SK-N-SH (cell line): ENCODE measurements at regions of chr9 and their contacts with region 1.

Region 1: DNA sequence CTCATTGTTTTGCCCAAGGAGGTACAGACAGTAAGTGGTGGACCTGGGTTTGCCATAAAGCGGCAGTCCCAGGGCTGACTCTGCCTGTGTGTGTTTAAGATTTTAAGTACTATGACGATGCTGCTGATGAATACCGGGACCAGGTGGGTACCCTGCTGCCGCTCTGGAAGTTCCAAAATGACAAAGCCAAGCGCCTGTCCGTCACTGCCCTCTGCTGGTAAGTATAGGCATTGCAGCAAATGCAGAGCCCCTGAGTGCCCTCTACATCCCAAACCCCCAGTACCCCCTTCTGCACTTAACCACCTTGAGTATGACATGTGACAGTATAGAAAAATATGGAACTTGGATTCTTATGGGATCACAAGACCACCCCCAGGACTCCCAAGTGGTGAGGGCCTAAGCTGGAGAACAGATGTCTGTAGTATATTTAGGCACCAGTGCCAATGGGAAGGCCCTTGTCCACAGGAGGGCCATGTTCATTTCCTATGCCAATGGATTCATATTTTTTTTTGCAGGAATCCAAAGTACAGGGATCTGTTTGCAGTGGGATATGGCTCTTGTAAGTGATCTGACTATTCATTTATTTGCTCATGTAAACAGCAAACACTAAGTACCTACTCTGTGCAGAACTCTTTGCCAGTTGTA is 22.0 kb downstream of the ENHO start:
- DNase-seq: peak; percentile 79
- H3K4me3 ChIP-seq: no peak overlapping the region
- H3K27ac ChIP-seq: no peak overlapping the region
- H3K4me1 ChIP-seq: peaks cover 0 to 6% of the 10 kb centered on the region in 2 experiments; a peak in 1 of 4 replicates
- H3K27me3 ChIP-seq: no peaks in the 10 kb centered on the region
- CTCF ChIP-seq: peak; percentile 97
- EP300 ChIP-seq: no peak
- RAD21 ChIP-seq: peak; percentile 93

Region 2: DNA sequence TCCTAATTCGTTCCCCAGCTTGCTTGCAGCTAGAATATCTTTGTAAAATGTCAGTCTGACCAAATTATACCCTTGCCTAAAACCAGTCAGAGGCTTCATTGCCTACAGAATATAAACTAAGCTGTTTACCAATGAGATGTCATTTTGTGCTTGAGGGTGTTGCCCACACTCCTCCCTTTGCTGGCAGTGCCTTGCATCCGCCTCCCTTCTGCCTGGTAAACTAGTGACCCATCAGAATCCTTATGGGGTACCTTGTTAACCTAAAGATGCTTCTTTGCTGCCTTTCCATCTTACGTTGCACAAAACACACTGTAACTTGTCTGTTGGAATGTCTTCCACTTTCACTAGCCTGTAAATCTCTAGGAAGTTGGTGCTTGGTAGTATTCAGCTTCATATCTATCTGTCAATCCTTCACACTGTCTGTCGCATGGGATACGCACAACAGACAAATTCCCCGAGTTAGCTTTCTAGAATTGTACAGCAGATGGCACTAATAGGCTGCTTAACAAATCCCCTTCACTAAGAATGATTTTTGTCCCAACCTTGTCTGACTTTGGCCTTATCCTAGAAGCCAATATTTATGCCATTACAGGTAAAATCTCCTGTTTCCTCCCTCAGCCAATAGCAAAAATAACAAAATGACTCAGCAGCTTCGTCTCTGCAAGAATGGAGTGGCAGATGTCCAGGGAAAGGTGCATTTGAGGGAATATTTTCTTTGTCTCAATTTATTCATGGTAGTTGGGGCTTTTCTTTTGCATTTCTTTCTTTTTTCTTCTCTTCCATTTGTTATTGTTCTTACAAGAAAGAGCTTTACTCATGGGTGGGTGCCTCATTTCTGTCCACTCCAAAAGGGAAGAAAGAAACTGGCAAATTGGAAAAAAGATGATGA is 168.4 kb before region 1 on chr9:
- CTCF ChIA-PET with region 1: interaction called, 45 read pairs
- POLR2A ChIA-PET with region 1: no interaction called
- DNase-seq: peak; percentile 46
- H3K4me3 ChIP-seq: no peak overlapping the region; a peak in 1 of 4 replicates
- H3K27ac ChIP-seq: no peak overlapping the region
- H3K4me1 ChIP-seq: peaks cover 0 to 6% of the 10 kb centered on the region in 2 experiments; a peak in 2 of 4 replicates
- H3K27me3 ChIP-seq: no peaks in the 10 kb centered on the region
- CTCF ChIP-seq: peak; percentile 62
- EP300 ChIP-seq: no peak
- RAD21 ChIP-seq: peak; percentile 88

Region 3: DNA sequence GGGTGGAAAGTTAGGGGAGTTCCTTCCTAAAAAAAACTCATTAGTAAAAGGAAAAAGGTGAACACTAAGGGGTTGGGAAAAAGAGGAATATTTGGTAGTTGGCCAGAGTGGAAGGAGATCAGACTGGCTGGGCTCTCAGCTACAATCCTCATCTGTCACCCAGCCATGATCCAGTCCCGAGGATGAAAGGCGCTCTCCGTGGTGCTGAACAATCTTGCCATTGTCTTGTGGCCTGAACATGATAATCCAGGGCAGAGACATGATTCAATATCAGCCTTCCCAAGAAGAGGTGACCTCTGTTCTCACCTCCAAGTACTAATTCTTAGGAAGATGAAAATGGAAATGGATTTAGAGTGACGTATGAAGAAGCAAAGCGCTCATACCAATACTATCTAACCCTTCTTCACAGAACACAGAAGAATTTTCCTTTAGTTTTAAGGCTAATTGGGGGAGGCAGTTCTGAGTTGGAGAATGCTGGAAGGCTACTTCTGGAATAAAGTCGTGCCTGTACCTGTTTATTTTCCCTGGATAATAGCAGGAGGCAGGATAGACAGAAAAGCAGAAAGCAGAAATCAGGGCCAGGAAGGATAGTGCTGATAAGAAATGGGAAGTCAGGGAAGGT is 87.4 kb before region 1 on chr9:
- CTCF ChIA-PET with region 1: interaction called, 17 read pairs
- POLR2A ChIA-PET with region 1: no interaction called
- DNase-seq: no peak
- H3K4me3 ChIP-seq: no peak overlapping the region
- H3K27ac ChIP-seq: no peak overlapping the region
- H3K4me1 ChIP-seq: peaks cover 0 to 12% of the 10 kb centered on the region in 2 experiments; a peak in 1 of 4 replicates
- H3K27me3 ChIP-seq: no peaks in the 10 kb centered on the region
- CTCF ChIP-seq: no peak
- EP300 ChIP-seq: no peak
- RAD21 ChIP-seq: no peak

Region 4: DNA sequence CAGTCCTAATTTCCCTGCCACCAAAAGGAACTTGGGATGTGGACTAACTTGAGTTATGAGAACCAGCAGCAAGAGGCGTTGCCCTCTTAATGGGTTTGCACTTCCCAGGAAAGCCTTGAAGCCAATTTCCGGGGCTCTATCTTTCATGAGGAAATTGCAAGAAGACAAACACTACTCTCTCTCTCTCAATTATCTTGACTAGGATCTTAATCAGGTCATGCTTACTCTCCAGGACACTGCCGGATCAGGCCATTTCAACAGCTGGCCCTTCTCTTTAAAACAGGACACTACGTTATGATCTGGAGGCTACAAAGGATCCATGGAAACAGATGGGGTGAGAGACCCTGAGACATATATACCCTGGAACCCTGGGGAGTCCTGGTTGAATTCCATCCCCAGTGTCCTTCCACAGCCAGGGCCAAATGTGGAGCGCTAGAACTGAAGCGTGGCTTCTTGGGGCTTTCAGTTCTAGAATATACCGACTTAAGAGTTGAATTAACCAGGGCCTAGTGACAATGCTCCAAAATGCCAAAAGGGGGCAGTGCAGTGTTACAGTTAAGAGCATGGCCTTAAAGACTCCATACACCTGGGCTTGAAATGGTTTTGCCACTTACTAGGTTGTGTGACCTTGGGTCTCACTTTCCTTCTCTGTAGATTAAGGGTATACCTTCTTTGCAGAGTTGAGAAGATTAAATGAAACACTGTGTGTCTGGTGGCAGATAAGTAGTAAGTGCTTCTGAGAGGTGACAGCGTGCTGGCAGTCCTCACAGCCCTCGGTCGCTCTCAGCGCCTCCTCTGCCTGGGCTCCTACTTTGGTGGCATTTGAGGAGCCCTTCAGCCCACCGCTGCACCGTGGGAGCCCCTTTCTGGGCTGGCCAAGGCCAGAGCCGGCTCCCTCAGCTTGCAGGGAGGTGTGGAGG is 63.5 kb before region 1 on chr9:
- CTCF ChIA-PET with region 1: interaction called, 114 read pairs
- POLR2A ChIA-PET with region 1: no interaction called
- DNase-seq: peak; percentile 74
- H3K4me3 ChIP-seq: no peak overlapping the region
- H3K27ac ChIP-seq: peak overlapping the region in 1 of 2 experiments; percentile 59; a peak in 2 of 4 replicates
- H3K4me1 ChIP-seq: peaks cover 12 to 21% of the 10 kb centered on the region in 2 experiments; a peak in 3 of 4 replicates
- H3K27me3 ChIP-seq: no peaks in the 10 kb centered on the region
- CTCF ChIP-seq: peak; percentile 92
- EP300 ChIP-seq: no peak
- RAD21 ChIP-seq: peak; percentile 94

Region 5: GRCh38 chr9:34458013-34458958 is 42.5 kb before region 1 on chr9 and contains the starts of genes DNAI1 and FAM219A:
- CTCF ChIA-PET with region 1: interaction called, 21 read pairs
- POLR2A ChIA-PET with region 1: no interaction called
- DNase-seq: peak; percentile 99
- H3K4me3 ChIP-seq: peak within 1 kb of the TSS; percentile 76 to 77
- H3K27ac ChIP-seq: peak within 1 kb of the TSS; percentile 61 to 82
- H3K4me1 ChIP-seq: peaks cover 20 to 21% of the 10 kb centered on the region in 2 experiments; a peak in 2 of 4 replicates
- H3K27me3 ChIP-seq: no peaks in the 10 kb centered on the region
- CTCF ChIP-seq: no peak
- EP300 ChIP-seq: no peak
- RAD21 ChIP-seq: no peak
- polyA plus RNA-seq, gene DNAI1: 0.46 and 0.55 TPM in 2 replicates
- polyA plus RNA-seq, gene FAM219A: 15.7 and 18.5 TPM in 2 replicates

Region 6: DNA sequence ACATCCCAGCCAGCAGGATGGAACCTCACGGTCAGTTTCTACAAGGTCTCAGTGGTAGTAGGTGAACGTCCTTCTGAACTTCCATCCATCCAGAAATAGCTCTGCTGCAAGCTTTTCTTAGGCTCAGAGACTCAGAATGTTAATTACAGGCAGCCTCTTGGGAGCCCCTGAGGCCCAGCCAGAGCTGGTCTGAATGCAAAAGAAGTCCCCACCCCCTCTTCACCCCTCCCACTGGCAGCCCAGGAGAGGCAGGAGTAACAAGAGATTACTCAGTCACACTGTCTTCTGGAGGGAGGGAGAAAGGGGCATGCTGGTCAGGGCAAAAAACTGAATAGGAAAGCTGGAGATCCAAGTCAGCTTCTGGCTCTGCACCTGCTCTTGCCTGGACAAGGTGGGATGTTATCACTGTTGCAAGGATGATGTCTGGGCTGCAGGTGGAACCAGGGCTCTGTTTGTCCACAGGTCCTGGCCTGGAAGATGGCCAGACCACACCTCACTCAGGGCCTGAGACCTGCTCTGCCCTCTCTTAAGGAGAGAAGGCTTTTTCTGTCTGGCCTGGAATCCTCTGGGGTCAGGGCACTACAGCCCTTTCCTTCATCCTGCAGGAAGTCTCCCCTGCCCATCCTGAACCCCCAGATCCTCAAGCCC is 12.9 kb after region 1 on chr9:
- CTCF ChIA-PET with region 1: interaction called, 53 read pairs
- POLR2A ChIA-PET with region 1: no interaction called
- DNase-seq: no peak
- H3K4me3 ChIP-seq: no peak overlapping the region
- H3K27ac ChIP-seq: no peak overlapping the region
- H3K4me1 ChIP-seq: peaks cover 0 to 16% of the 10 kb centered on the region in 2 experiments; a peak in 1 of 4 replicates
- H3K27me3 ChIP-seq: no peaks in the 10 kb centered on the region; the same call in 1 of the 2 replicates
- CTCF ChIP-seq: no peak
- EP300 ChIP-seq: no peak
- RAD21 ChIP-seq: no peak

Region 7: GRCh38 chr9:34603610-34604231 is 103.0 kb after region 1 on chr9:
- CTCF ChIA-PET with region 1: interaction called, 13 read pairs
- POLR2A ChIA-PET with region 1: no interaction called
- DNase-seq: peak; percentile 88
- H3K4me3 ChIP-seq: no peak overlapping the region; a peak in 1 of 4 replicates
- H3K27ac ChIP-seq: no peak overlapping the region
- H3K4me1 ChIP-seq: peaks cover 0 to 7% of the 10 kb centered on the region in 2 experiments; a peak in 1 of 4 replicates
- H3K27me3 ChIP-seq: no peaks in the 10 kb centered on the region
- CTCF ChIP-seq: peak; percentile 94
- EP300 ChIP-seq: no peak
- RAD21 ChIP-seq: peak; percentile 97

Region 8: GRCh38 chr9:35415386-35416096 is 914.8 kb after region 1 on chr9:
- CTCF ChIA-PET with region 1: no interaction called
- POLR2A ChIA-PET with region 1: no interaction called
- DNase-seq: no peak
- H3K4me3 ChIP-seq: no peak overlapping the region
- H3K27ac ChIP-seq: no peak overlapping the region
- H3K4me1 ChIP-seq: no peaks in the 10 kb centered on the region
- H3K27me3 ChIP-seq: no peaks in the 10 kb centered on the region
- CTCF ChIP-seq: no peak; the same call in 1 of the 2 replicates
- EP300 ChIP-seq: no peak
- RAD21 ChIP-seq: no peak